ENCODE measurements at regions of chr20 and their contacts with region 1.

Region 1: GRCh38 chr20:41339507-41340326 is 904 bp upstream of the LPIN3 start:
- DNase-seq: no peak
- H3K4me3 ChIP-seq: peak overlapping the region; percentile 47 to 70 (median 56)
- H3K27ac ChIP-seq: peak overlapping the region; percentile 92 to 94 (median 93)
- H3K4me1 ChIP-seq: peaks cover 16 to 70% (median 38%) of the 10 kb centered on the region in 3 donors
- H3K27me3 ChIP-seq: no peaks in the 10 kb centered on the region
- CTCF ChIP-seq: peak; percentile 82 to 100 (median 99)
- POLR2A ChIP-seq: no peak

Region 2: GRCh38 chr20:40966103-40966502 is 373.6 kb before region 1 on chr20:
- intact Hi-C with region 1: loop called (anchors 5 kb)
- DNase-seq: no peak
- H3K4me3 ChIP-seq: no peak overlapping the region
- H3K27ac ChIP-seq: no peak overlapping the region
- H3K4me1 ChIP-seq: peaks cover 0 to 19% (median 0%) of the 10 kb centered on the region in 3 donors
- H3K27me3 ChIP-seq: peaks cover 0 to 3% (median 0%) of the 10 kb centered on the region in 4 donors
- CTCF ChIP-seq: peak in 1 of 6 experiments; percentile 19
- POLR2A ChIP-seq: no peak

Region 3: DNA sequence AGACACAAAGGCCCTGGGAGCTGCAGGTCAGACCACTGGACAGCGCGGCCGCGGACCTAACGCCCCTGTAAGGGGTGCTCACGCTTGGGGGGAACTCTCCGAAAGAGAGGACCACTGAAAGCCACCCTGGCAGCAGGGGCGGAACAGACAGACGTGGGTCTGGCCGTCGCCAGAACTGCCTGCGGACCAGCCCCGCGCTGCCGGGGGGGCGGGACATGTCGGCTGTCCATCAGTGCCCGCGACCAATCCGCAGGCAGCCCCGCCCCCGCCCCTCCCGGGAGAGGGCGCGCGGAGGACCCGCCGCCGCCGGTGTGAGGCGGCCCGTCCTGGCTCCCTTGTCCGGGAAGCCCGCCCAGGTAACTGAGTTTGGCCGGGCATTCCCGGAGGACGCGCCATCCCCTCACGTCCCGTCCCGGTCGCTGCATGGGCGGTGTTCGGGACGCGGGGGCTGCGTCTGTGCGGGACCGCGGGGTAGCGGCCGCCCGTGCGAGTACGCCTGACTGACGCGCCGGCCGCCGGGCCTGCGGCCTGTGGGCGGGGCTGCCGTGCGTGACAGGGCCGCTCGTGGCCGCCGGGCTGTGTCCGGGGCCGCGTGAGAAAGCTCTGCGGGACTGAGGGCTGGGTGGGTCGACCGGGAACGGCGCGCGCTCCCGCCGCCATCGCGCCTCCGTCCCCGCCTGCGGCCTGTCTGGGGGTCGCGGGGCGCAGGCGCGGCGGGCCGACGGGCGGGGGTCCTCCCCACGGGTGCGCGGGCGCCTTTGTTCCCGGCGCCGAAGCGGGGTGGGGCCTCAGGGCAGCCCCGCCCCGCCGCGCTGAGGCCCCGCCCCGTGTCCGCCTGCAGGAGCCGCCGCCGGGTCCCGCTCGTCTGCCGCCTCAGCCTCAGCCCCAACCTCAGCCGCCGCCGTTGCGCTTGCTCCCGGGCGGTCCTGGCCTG is 202.8 kb before region 1 on chr20 and contains the start of gene PLCG1:
- intact Hi-C with region 1: loop called (anchors 10 kb)
- DNase-seq: peak; percentile 30
- H3K4me3 ChIP-seq: peak within 1 kb of the TSS; percentile 72 to 98 (median 86)
- H3K27ac ChIP-seq: peak within 1 kb of the TSS; percentile 91 to 98 (median 95)
- H3K4me1 ChIP-seq: peaks cover 35 to 79% (median 49%) of the 10 kb centered on the region in 3 donors
- H3K27me3 ChIP-seq: no peaks in the 10 kb centered on the region
- CTCF ChIP-seq: peak in 1 of 6 experiments; percentile 10
- POLR2A ChIP-seq: peak in 2 of 4 donors; percentile 59 to 86
- total RNA-seq, gene PLCG1: 30.4 to 84.7 (median 47.8) TPM

Region 4: DNA sequence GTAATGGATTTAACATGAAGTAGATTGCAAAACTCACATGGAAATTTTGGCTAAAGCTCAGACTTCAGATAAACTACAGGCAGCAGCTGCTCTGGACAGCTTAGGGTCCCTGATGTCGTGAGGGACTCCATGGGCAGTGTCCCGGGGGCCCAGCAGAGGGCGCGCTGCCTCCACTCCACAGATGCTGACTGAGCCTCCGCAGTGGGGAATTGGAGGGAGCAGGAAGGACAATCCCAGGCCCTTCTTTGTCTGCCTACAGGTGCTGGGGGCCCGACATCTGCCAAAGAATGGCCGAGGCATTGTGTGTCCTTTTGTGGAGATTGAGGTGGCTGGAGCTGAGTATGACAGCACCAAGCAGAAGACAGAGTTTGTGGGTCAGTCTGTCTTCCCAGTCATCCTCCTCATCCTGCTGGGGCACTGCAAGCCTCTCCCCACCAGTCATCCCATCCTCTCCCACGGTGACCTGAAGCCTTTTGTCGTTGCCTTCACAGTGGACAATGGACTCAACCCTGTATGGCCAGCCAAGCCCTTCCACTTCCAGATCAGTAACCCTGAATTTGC is 166.5 kb before region 1 on chr20:
- intact Hi-C with region 1: loop called (anchors 5 kb)
- DNase-seq: no peak
- H3K4me3 ChIP-seq: no peak overlapping the region
- H3K27ac ChIP-seq: peak overlapping the region; percentile 67 to 84 (median 78)
- H3K4me1 ChIP-seq: peaks cover 5 to 81% (median 22%) of the 10 kb centered on the region in 3 donors
- H3K27me3 ChIP-seq: no peaks in the 10 kb centered on the region
- CTCF ChIP-seq: peak; percentile 73 to 97 (median 94)
- POLR2A ChIP-seq: no peak

Region 5: DNA sequence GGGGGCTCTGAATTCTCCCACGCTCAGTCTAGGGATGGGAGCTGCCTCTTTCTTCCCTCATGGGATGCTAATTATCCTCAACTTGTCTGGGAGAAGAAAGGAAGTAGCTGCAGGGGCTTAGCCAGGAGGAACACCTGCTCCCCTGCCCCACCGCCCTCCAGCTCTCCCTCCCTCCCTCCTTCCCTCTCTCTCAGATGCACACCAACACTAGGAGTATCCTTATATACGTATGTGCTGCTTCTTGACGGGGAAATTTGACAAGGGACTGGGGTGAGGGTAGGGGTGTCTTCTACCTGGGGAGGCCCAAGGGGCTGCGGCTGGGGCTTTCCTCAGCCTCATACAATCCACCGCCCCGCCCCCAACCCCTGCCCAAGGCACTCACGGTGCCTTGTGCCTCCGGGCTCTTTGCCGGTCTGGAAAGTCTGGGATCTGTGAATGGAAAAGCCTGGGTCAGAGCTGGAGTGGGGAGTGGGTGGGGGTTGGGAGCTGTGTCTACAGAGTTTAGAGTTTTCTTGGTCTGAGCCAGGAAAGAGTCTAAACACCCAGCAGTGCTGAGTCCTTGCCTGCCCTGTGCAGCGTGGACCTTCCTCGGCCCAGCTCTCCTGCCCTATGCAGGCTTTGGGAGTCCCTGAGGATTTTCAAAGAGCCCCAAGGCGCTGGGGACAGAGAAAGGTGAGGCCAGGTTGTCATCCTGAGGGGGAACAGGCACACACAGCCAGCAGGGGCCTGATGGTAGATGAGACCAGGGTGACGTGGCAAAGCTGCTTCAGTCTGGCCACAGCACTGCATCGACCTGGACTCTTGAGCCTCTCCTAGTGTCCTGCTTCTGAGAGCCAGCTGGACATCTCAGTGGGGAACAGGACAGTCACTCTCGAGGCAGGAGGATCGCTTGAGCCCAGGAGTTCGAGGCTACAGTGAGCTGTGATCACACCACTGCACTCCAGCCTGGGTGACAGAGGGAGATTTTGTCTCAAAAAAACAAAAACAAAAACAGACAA is 56.2 kb after region 1 on chr20:
- intact Hi-C with region 1: loop called (anchors 5 kb)
- DNase-seq: no peak
- H3K4me3 ChIP-seq: no peak overlapping the region
- H3K27ac ChIP-seq: peak overlapping the region in 3 of 4 donors; percentile 30 to 51 (median 42)
- H3K4me1 ChIP-seq: peaks cover 30 to 95% (median 60%) of the 10 kb centered on the region in 3 donors
- H3K27me3 ChIP-seq: no peaks in the 10 kb centered on the region
- CTCF ChIP-seq: no peak
- POLR2A ChIP-seq: no peak

Region 6: GRCh38 chr20:41411391-41411847 is 71.7 kb after region 1 on chr20:
- intact Hi-C with region 1: loop called (anchors 5 kb)
- DNase-seq: no peak
- H3K4me3 ChIP-seq: peak overlapping the region in 1 of 4 donors; percentile 10
- H3K27ac ChIP-seq: peak overlapping the region; percentile 65 to 86 (median 80)
- H3K4me1 ChIP-seq: peaks cover 4 to 73% (median 19%) of the 10 kb centered on the region in 3 donors
- H3K27me3 ChIP-seq: no peaks in the 10 kb centered on the region
- CTCF ChIP-seq: peak in 5 of 6 experiments; percentile 19 to 59 (median 35)
- POLR2A ChIP-seq: no peak